GM10248 (cell line): ENCODE measurements at regions of chr7 and their contacts with region 1.

Region 1: GRCh38 chr7:1175967-1176851 is 16.2 kb upstream of the ZFAND2A start:
- DNase-seq: peak; percentile 86
- CTCF ChIP-seq: peak; percentile 92

Region 2: DNA sequence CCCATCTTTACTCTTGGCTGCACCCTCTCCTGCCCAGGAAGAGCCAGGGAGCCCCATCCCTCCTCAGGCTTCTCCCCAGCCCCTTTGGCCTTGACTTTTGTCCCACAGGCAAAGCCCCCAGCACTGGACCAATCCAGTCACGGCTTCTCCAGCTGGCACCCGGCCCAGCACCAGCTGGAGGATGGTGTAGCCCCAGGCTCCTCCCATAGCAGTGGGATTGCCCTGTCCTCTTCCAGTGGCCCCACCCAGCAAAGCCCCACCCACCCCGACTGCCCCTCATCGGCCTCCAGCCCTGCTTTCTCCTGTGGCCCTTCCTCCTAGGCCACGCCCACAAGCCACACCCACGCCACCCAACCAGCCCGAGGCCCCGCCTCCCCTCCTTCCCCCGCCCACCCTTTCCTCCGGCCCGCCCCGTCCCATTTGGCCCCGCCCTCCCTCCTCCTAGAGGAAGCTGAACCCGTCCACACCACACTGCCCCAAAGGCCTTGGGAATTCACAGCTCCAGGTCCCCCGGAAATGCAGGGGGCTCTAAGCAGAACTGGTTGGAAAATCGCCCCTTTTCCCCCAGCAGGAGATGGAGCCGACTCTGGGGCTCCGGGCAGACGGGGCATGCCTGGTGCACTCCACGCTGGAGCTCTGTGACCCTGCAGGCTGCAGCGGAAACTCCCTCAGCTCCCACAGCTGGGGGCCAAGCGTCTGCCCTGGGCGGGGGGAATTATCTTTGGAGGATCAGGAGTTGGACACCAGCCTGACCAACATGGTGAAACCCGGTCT is 274.6 kb before region 1 on chr7:
- CTCF ChIA-PET with region 1: no interaction called
- POLR2A ChIA-PET with region 1: no interaction called
- DNase-seq: peak; percentile 87
- CTCF ChIP-seq: no peak

Region 3: DNA sequence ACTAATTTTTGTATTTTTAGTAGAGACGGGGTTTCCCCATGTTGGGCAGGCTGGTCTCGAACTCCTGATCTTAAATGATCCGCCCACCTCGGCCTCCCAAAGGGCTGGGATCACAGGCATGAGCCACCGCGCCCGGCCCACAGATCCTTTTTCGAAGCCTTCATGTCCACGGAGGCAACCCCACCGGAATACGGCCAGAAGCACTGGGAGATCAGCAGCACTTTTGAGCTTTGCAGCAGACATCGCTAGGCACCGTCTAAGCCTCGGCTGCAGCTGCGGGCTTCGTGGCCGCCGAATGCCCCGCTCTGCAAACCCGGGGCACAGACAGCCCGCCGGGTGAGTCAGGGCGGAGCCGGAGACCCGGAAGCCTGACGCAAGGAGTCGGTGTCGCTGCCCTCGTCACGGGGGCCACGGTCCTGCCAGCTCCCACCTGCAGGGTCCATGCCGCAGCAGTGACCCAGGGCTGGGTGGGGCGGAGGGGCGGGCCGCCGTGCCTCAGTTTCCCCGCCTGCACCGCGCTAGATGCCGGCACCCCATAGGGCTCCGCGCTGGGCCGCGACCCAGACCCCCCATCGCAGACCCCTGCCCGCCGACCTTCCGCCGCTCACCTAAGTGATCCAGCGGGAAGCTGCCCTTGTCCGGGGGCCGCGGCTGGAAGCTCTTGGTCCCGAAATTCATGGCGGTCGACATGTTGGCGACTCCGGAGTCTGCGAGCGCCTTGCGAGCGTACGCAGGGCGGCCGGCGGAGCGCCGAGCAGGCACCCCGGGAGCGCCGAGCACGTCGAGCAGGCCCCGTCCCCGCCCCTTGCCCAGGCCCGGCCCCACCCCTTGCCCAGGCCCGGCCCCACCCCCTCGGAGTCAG is 201.2 kb before region 1 on chr7 and contains the start of gene COX19:
- CTCF ChIA-PET with region 1: interaction called, 25 read pairs
- POLR2A ChIA-PET with region 1: interaction called, 3 read pairs
- DNase-seq: peak; percentile 94
- CTCF ChIP-seq: no peak

Region 4: DNA sequence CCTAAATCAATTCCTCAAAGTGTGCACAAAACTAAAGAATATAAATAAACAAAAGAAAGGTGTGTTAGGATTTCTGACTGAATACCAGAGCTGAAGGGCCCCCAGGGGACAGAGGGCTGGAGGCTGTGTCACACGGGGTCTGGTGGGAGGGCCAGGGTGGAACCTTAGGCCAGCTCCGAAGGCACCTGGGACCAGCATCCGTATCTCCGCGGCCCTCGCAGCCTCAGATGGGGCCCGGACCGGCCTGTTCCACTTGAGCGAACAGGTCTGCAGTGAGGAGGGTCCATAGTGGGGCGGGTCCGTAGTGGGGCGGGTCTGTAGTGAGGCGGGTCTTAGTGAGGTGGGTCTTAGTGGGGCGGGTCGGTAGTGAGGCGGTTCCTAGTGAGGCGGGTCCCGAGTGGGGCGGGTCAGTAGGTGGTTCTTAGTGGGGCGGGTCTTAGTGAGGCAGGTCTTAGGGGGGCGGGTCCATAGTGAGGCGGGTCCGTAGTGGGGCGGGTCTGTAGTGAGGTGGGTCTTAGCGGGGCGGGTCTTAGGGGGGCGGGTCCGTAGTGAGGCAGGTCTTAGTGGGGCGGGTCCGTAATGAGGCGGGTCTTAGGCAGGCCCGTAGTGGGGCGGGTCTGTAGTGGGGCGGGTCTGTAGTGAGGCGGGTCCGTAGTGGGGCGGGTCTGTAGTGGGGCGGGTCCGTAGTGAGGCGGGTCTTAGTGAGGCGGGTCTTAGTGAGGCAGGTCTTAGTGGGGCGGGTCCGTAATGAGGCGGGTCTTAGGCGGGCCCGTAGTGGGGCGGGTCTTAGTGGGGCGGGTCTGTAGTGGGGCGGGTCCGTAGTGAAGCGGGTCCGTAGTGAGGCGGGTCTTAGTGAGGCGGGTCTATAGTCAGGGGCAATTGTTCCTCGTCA is 116.8 kb before region 1 on chr7:
- CTCF ChIA-PET with region 1: interaction called, 21 read pairs
- POLR2A ChIA-PET with region 1: no interaction called
- DNase-seq: peak; percentile 61
- CTCF ChIP-seq: no peak

Region 5: GRCh38 chr7:1086588-1087464 is 89.4 kb before region 1 on chr7:
- CTCF ChIA-PET with region 1: interaction called, 21 read pairs
- POLR2A ChIA-PET with region 1: no interaction called
- DNase-seq: peak; percentile 90
- CTCF ChIP-seq: peak; percentile 85

Region 6: DNA sequence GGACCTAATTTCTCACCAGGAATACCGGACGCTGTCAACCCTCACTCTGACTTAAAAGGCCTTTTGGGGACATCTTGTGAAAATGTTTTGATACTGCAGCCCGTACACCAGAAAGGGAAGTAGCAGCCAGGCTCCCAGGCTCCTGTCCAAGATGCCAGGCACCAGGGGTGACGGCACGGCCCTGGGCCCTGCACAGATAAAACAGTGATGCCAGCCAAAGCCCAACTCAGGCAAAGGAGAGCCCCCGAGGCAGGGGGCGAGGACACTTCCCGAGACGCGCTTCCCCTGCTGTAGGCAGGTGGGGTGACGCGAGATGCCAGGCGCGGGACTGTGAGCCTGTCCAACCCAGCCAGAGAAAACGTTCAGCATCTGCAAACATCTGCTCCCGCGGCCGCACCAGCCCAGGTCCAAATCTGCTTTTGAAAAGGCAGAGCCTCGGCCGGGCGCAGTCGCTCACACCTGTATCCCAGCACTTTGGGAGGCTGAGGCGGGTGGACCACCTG is 31.9 kb before region 1 on chr7:
- CTCF ChIA-PET with region 1: interaction called, 10 read pairs
- POLR2A ChIA-PET with region 1: no interaction called
- DNase-seq: peak; percentile 52
- CTCF ChIP-seq: peak; percentile 58

Region 7: DNA sequence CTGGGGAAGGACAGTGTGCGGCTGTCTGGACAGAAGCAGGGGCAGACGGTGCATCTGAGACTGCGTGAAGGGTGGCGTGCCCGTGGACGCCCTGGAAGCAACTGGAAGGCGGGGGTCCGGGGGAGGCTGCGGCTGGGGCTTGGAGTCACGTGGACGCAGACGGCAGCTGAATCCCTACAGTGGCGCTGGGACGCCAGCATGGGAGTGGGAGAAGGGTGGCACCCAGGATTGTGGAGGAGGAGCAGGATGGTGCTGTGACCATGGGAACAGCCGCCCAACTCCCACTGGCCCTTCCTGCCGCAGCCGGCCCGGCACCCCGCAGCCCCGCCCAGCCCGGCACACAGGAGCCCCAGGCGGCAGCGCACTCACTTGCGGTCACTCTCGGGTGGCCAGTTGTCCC is 318.2 kb after region 1 on chr7:
- CTCF ChIA-PET with region 1: no interaction called
- POLR2A ChIA-PET with region 1: no interaction called
- DNase-seq: no peak
- CTCF ChIP-seq: no peak